Activated CD8-positive, alpha-beta T cell treated with anti-CD3 and anti-CD28 coated beads for 36 hours (primary cell): ENCODE measurements at regions of chr12 and their contacts with region 1.

Region 1: DNA sequence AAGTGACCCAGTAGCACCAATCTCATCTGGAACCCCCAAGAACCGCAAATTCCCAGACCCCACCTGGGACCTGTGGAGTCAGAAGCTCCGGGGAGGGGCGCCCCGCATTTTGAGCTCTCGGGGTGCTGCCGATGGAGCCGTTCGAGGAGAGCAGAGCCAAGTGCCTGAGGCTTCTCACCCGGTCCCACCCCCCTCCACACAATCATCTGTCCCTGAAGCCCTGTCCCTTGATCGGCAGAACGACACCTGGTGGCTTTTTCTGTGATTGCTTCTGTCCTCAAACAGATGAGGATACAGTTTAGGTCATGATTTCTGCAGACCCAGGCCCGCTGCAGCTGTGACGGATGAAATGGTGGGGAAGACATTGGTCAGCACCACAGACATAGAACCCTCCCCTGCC is 74.7 kb downstream of the NOC4L start:
- DNase-seq: peak; percentile 61
- ATAC-seq: peak; percentile 72
- H3K4me3 Mint-ChIP-seq: no peak overlapping the region
- H3K27ac Mint-ChIP-seq: no peak overlapping the region
- H3K4me1 Mint-ChIP-seq: peaks cover 4% of the 10 kb centered on the region
- H3K27me3 Mint-ChIP-seq: peaks cover 14% of the 10 kb centered on the region
- CTCF ChIP-seq: peak; percentile 22

Region 2: DNA sequence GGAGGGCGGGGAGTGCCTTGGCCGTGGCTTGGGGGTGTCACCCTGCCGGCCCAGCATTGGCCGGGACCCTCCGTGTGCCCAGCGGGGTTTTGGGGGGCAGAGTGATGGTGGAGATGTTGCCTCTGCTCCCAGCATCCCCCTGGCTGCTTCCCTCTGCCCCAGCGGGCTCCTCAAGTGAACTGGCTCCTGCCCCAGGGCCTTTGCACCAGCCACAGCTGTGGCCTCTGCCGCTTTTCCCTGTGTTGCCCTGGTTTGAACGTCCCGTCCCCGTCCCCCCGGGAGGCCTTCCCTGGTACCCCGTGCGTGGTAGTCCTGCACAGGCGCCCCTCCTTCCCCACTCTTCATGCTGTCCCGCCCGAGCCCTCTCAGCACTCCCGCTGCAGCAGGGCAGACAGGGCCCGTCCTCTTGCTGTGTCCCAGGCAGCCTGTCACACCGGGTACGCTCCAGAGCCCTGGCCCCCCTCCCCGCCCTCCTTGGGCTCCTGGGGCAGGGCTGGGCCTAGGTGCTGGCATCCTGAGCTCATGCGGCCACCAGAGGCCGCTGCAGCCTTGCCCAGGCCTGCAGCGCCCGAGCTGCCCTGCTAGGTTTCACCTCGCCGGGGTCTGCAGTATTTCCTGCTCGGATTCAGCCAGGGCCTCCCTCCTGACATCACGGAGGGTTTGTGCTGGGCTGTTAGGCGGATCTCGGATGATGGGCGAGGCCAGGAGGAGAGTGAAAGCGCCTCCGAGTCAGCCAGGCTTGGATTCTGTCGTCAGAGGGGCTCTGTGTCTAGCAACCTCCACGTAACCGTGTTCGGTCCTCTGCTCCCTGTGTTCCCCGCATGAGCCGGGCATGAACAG is 65.2 kb before region 1 on chr12:
- CTCF ChIA-PET with region 1: interaction called, 23 read pairs
- POLR2A ChIA-PET with region 1: no interaction called
- intact Hi-C with region 1: loop called (anchors 5 kb)
- DNase-seq: peak; percentile 79
- ATAC-seq: peak; percentile 89
- H3K4me3 Mint-ChIP-seq: no peak overlapping the region
- H3K27ac Mint-ChIP-seq: no peak overlapping the region
- H3K4me1 Mint-ChIP-seq: no peaks in the 10 kb centered on the region
- H3K27me3 Mint-ChIP-seq: no peaks in the 10 kb centered on the region
- CTCF ChIP-seq: peak; percentile 84

Region 3: DNA sequence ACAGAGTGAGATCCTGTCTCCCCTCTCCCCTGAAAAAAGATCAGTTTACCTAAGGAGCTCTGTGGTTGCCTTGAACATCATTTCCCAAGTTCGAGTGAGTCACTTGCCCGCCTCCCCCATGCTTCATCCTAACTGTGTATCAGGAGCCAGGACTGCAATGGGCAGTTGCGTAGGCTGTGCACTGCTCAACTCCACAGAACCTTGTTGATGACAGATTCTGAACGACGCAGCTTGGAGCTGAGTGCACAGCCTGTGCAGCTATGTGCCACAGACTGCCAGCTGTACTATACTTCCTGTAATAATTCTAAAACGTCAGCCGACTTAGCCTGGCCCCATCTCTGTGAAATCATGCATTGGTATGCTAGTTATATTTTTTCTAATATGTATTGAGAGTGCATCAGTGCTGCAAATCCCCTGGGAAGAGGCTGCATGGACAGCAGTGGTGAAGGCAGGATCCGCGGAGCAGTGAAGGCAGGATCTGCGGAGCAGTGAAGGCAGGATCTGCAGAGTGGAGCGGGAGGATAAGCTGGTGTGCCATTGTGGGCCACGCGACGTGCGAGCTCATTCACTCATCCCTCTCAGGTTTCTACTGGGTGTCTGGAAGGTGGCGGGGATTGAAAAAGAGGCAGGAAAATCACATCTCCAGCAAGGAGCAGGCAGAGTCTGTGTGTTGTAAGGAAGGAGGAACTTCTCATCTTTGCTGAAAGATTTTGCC is 29.7 kb after region 1 on chr12:
- CTCF ChIA-PET with region 1: no interaction called
- POLR2A ChIA-PET with region 1: no interaction called
- intact Hi-C with region 1: no loop called
- DNase-seq: no peak
- ATAC-seq: no peak
- H3K4me3 Mint-ChIP-seq: no peak overlapping the region
- H3K27ac Mint-ChIP-seq: no peak overlapping the region
- H3K4me1 Mint-ChIP-seq: no peaks in the 10 kb centered on the region
- H3K27me3 Mint-ChIP-seq: no peaks in the 10 kb centered on the region
- CTCF ChIP-seq: no peak